ENCODE measurements at regions of chr5 and their contacts with region 1.

Region 1: DNA sequence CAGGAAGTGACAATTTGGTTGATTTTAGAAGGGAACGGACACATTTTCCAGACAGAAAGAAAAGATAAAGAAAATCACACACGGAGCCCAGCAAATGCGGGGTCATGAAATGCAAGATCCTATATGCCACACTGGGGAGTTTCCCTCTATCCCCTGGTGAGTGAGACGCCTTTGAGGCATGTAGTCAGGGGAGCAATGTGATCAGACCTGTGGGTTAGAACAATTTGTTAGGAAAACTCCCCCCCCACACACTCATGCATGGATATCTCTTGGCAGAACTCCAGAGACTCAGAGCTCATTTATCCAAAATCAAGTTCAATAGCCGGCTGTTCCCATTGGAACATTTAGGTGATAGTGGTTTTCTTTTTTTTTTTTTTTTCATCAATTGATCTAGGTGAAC is 71.7 kb upstream of the TRIO start:
- DNase-seq: peak; percentile 62
- H3K4me3 ChIP-seq: no peak overlapping the region
- H3K27ac ChIP-seq: no peak overlapping the region
- H3K4me1 ChIP-seq: peaks cover 7% of the 10 kb centered on the region
- H3K27me3 ChIP-seq: no peaks in the 10 kb centered on the region
- CTCF ChIP-seq: no peak

Region 2: GRCh38 chr5:14108170-14108996 is 37.0 kb after region 1 on chr5:
- CTCF ChIA-PET with region 1: no interaction called
- dilution Hi-C with region 1: loop called (anchors 5 kb)
- in situ Hi-C with region 1: no loop called
- intact Hi-C with region 1: no loop called
- DNase-seq: no peak
- H3K4me3 ChIP-seq: no peak overlapping the region
- H3K27ac ChIP-seq: peak overlapping the region; percentile 79
- H3K4me1 ChIP-seq: peaks cover 38% of the 10 kb centered on the region
- H3K27me3 ChIP-seq: no peaks in the 10 kb centered on the region
- CTCF ChIP-seq: peak in 1 of 2 donors; percentile 40

Measured in mammary epithelial cell (primary cell).